Mammary epithelial cell (primary cell): ENCODE measurements at regions of chr16 and their contacts with region 1.

Region 1: GRCh38 chr16:25707982-25708583 is 16.3 kb downstream of the HS3ST4 start:
- DNase-seq: peak; percentile 13
- H3K4me3 ChIP-seq: no peak overlapping the region
- H3K27ac ChIP-seq: no peak overlapping the region
- H3K4me1 ChIP-seq: no peaks in the 10 kb centered on the region
- H3K27me3 ChIP-seq: no peaks in the 10 kb centered on the region
- CTCF ChIP-seq: peak; percentile 42 to 62

Region 2: DNA sequence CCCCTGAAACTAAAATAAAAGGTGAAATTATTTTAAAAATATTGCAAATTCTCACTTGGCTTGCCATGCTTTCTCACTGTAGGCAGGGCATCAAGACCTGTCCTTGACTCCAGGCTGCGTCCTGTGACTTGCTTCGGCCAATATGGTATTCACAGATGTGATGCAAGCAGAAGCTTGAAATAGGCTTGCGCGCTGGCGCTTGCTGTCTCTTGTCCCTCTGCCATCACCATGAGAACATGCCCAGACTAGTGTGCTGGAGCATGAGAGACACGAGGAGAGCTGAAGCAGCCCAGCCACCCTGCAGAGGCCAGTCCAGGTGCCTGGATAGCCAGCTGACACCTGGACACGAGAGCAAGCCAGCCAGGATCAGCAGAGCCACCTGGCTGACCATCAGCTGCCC is 428.6 kb before region 1 on chr16:
- CTCF ChIA-PET with region 1: interaction called, 4 read pairs
- dilution Hi-C with region 1: no loop called
- in situ Hi-C with region 1: loop called (anchors 25 kb)
- intact Hi-C with region 1: loop called (anchors 1 kb)
- DNase-seq: peak; percentile 67
- H3K4me3 ChIP-seq: no peak overlapping the region
- H3K27ac ChIP-seq: no peak overlapping the region
- H3K4me1 ChIP-seq: peaks cover 8% of the 10 kb centered on the region
- H3K27me3 ChIP-seq: no peaks in the 10 kb centered on the region
- CTCF ChIP-seq: no peak

Region 3: DNA sequence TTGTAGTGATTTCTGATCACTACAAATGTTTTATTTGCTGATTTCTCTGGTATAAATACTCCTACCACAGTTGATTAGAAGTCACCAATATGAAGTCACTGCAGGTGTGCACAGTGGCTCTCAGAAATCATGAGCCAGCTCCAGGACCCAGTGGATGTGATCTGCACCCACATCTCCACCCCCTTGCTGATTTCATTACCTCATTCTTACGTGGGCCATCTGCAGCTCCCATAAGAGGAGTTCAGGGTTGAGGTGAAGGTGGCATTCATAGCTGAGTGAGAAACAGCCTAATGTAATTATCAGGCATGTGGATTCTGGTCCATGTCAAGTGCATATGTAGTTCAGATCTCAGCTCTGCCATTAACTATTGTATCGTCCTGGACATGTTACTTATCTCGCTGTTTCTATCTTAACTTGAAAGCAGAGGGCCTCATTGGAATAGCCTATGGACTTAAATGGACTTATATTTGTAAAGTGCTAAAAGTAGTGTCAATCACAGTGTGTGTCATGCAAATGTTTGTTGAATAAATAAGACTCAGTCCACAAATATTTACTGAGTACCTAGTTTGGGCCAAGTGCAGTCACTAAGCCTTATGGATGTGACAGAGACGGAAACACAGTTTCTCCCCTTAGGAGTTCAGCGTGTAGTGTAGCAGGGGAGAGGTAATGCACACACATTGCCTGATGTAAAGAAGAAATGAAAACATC is 409.8 kb before region 1 on chr16:
- CTCF ChIA-PET with region 1: no interaction called
- dilution Hi-C with region 1: no loop called
- in situ Hi-C with region 1: loop called (anchors 25 kb)
- intact Hi-C with region 1: no loop called
- DNase-seq: no peak
- H3K4me3 ChIP-seq: no peak overlapping the region
- H3K27ac ChIP-seq: no peak overlapping the region
- H3K4me1 ChIP-seq: no peaks in the 10 kb centered on the region
- H3K27me3 ChIP-seq: no peaks in the 10 kb centered on the region
- CTCF ChIP-seq: no peak